Dorsolateral prefrontal cortex (tissue), 120 donors: ENCODE measurements at regions of chr6 and their contacts with region 1.

Region 1: DNA sequence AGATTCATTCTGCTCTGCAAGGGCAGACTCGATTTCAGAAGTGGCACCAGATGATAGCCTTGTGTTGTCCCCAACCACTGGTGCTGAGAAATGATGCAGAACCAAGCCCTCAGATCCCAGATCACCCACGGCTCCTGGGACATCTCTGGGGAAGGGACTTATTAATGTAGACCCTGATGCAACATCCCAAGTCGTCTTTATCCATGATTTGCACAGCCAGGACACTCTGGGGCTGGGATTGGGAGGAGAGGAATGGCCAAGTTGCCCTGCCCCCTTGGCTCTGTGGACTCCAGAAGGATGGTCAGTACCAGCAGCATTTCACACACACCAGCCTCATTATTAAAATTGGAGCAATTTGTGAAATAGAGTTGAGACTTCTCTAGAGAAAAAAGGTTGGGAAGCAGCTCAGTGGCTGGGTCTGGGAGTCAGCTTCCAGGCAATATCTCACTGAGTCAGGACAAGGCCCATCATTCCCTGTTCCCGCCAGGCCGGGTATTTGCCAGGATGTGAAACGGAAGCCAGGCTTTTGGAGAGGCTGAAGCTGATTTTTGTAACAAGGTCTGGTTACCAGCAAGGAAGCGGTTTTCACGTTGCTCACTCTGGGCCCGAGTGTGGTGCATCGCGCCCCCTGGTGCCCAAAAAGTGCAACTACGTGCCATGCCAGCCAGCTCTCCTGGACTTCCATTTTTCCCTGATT is 67.4 kb downstream of the ZBTB2 start:
- DNase-seq: peak; percentile 53 to 89 (median 80)
- H3K4me3 ChIP-seq: peak overlapping the region in 20 of 59 donors; percentile 6 to 72 (median 16)
- H3K27ac ChIP-seq: peak overlapping the region in 27 of 59 donors; percentile 1 to 71 (median 24)
- H3K27me3 ChIP-seq: no peaks in the 10 kb centered on the region
- CTCF ChIP-seq: peak in 55 of 56 donors; percentile 96 to 100 (median 99)

Region 2: DNA sequence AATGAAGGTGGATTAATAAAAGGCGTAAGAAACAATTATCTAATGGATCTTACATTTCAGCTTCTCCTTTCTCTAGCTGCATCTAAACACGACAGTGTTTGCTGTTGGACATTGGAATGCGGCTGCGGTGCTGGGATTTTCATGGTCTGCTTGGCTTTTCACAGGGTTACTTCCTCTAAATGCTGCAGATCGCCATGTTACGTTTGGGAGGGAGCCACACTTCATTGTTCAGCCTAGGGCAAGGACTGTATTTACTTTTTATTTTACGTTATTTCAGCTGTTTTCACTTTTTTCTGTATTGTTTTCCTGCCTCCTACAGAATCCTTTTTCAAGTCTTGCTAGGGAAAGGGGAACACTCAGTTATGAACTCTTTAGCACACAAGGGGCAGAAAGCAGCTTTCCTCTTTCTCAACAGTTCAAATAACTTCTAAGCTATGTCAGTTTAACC is 556.3 kb before region 1 on chr6:
- intact Hi-C with region 1: no loop called
- DNase-seq: no peak
- H3K4me3 ChIP-seq: peak overlapping the region in 21 of 59 donors; percentile 0 to 34 (median 11)
- H3K27ac ChIP-seq: peak overlapping the region in 33 of 59 donors; percentile 2 to 63 (median 34)
- H3K27me3 ChIP-seq: peaks cover 0 to 4% (median 0%) of the 10 kb centered on the region in 45 donors
- CTCF ChIP-seq: no peak

Region 3: GRCh38 chr6:150891888-150892485 is 432.0 kb before region 1 on chr6:
- intact Hi-C with region 1: loop called (anchors 1 to 5 kb)
- DNase-seq: peak; percentile 31 to 90 (median 73)
- H3K4me3 ChIP-seq: no peak overlapping the region
- H3K27ac ChIP-seq: peak overlapping the region in 4 of 59 donors; percentile 3 to 86 (median 16)
- H3K27me3 ChIP-seq: no peaks in the 10 kb centered on the region
- CTCF ChIP-seq: peak; percentile 71 to 97 (median 91)

Region 4: DNA sequence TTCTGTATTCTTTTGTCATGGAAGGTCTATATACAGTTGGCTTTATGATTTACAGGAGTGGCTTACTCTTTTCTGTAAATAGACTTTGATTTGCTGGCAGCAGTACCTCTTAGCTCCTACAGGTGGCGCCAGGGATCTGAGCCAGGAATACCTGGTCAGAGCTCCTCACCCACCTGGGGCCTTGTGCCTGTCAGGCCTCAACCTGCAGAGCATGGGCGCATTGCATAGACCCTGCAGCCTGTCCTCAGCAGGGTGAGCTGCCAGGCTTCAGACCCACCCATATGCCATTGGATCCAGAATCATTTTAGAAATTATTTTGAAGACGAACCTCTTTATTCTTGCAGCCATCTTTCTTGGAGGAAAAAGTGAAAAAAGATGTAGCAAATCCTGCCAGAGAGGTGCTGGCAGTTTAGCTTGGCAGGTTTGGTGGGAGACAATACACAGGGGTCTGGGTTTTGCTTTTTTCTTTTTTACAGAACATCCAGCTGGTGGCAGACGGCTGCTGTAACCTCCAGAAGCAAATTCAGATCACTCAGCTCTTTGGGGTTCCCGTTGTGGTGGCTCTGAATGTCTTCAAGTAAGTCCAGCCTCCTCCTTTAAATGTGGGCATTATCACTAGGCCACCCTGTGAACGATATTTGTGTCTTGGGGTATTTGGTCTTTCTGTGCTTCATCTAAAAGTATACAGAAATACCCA is 309.4 kb before region 1 on chr6:
- intact Hi-C with region 1: loop called (anchors 1 to 2 kb)
- DNase-seq: peak; percentile 41 to 86 (median 70)
- H3K4me3 ChIP-seq: peak overlapping the region in 23 of 59 donors; percentile 2 to 41 (median 27)
- H3K27ac ChIP-seq: peak overlapping the region in 12 of 59 donors; percentile 13 to 53 (median 31)
- H3K27me3 ChIP-seq: no peaks in the 10 kb centered on the region
- CTCF ChIP-seq: peak; percentile 87 to 99 (median 96)